A549 (cell line): ENCODE measurements at regions of chr19 and their contacts with region 1.

Region 1: GRCh38 chr19:40523322-40524047 is 53.2 kb upstream of the SHKBP1 start:
- DNase-seq: peak; percentile 93 to 96
- ATAC-seq: peak; percentile 80 to 90
- H3K4me3 ChIP-seq: peak overlapping the region; percentile 9; the same call in 2 of the 3 replicates
- H3K27ac ChIP-seq: peak overlapping the region; percentile 57 to 73
- H3K4me1 ChIP-seq: peaks cover 21% of the 10 kb centered on the region
- CTCF ChIP-seq: peak; percentile 92
- EP300 ChIP-seq: no peak
- POLR2A ChIP-seq: no peak
- RAD21 ChIP-seq: peak; percentile 62 to 73

Region 2: GRCh38 chr19:40370997-40371801 is 152.3 kb before region 1 on chr19:
- CTCF ChIA-PET with region 1: no interaction called
- POLR2A ChIA-PET with region 1: no interaction called
- DNase-seq: no peak
- ATAC-seq: peak in 1 of 2 experiments; percentile 12; a peak in 2 of 6 replicates
- H3K4me3 ChIP-seq: no peak overlapping the region
- H3K27ac ChIP-seq: no peak overlapping the region
- H3K4me1 ChIP-seq: peaks cover 8% of the 10 kb centered on the region
- CTCF ChIP-seq: no peak
- EP300 ChIP-seq: no peak
- POLR2A ChIP-seq: no peak
- RAD21 ChIP-seq: no peak

Region 3: DNA sequence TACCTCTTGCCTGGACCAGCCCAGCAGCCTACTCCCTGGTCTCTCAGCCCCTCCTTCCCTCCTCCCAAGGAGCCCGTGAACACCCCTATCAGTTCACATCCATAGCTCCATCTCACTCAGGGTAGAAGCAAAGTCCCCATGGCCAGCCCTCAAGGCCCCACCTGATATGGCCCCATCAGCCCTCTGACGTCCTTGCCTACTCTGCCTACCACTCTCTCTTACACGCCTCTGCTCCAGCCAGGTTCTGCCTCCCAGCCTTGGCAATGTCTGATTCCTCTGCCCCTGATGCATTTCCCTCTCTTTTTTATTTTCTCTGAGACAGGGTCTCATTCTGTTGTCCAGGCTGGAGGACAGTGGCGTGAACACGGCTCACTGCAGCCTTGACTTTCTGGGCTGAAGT is 71.5 kb before region 1 on chr19:
- CTCF ChIA-PET with region 1: interaction called, 10 read pairs
- POLR2A ChIA-PET with region 1: no interaction called
- DNase-seq: no peak
- ATAC-seq: peak; percentile 58 to 60; a peak in 5 of 6 replicates
- H3K4me3 ChIP-seq: no peak overlapping the region
- H3K27ac ChIP-seq: no peak overlapping the region
- H3K4me1 ChIP-seq: no peaks in the 10 kb centered on the region
- CTCF ChIP-seq: no peak
- EP300 ChIP-seq: no peak
- POLR2A ChIP-seq: no peak
- RAD21 ChIP-seq: no peak

Region 4: GRCh38 chr19:40472516-40472915 is 51.0 kb before region 1 on chr19:
- CTCF ChIA-PET with region 1: interaction called, 16 read pairs
- POLR2A ChIA-PET with region 1: no interaction called
- DNase-seq: no peak
- ATAC-seq: 0 out of 6 replicates have a peak, but pooled peaks of 1 of the 2 experiments have one; percentile 12
- H3K4me3 ChIP-seq: no peak overlapping the region
- H3K27ac ChIP-seq: no peak overlapping the region
- H3K4me1 ChIP-seq: no peaks in the 10 kb centered on the region
- CTCF ChIP-seq: no peak
- EP300 ChIP-seq: no peak
- POLR2A ChIP-seq: no peak
- RAD21 ChIP-seq: no peak

Region 5: GRCh38 chr19:40502647-40503319 is 20.7 kb before region 1 on chr19:
- CTCF ChIA-PET with region 1: interaction called, 51 read pairs
- POLR2A ChIA-PET with region 1: interaction called, 3 read pairs
- DNase-seq: peak; percentile 58 to 76
- ATAC-seq: peak; percentile 79 to 89
- H3K4me3 ChIP-seq: no peak overlapping the region
- H3K27ac ChIP-seq: no peak overlapping the region
- H3K4me1 ChIP-seq: no peaks in the 10 kb centered on the region
- CTCF ChIP-seq: 0 out of 3 replicates have a peak, but pooled peaks have one; percentile 31
- EP300 ChIP-seq: no peak
- POLR2A ChIP-seq: no peak
- RAD21 ChIP-seq: peak in 1 of 2 experiments; percentile 42; a peak in 2 of 5 replicates

Region 6: GRCh38 chr19:40542202-40542859 is 18.8 kb after region 1 on chr19:
- CTCF ChIA-PET with region 1: interaction called, 971 read pairs
- POLR2A ChIA-PET with region 1: no interaction called
- DNase-seq: no peak
- ATAC-seq: no peak
- H3K4me3 ChIP-seq: no peak overlapping the region
- H3K27ac ChIP-seq: no peak overlapping the region
- H3K4me1 ChIP-seq: no peaks in the 10 kb centered on the region
- CTCF ChIP-seq: no peak
- EP300 ChIP-seq: no peak
- POLR2A ChIP-seq: no peak
- RAD21 ChIP-seq: no peak

Region 7: GRCh38 chr19:40682431-40682964 is 159.0 kb after region 1 on chr19:
- CTCF ChIA-PET with region 1: no interaction called
- POLR2A ChIA-PET with region 1: no interaction called
- DNase-seq: no peak
- ATAC-seq: no peak
- H3K4me3 ChIP-seq: no peak overlapping the region
- H3K27ac ChIP-seq: no peak overlapping the region
- H3K4me1 ChIP-seq: peaks cover 2% of the 10 kb centered on the region; the same call in 1 of the 3 replicates
- CTCF ChIP-seq: no peak
- EP300 ChIP-seq: no peak
- POLR2A ChIP-seq: no peak
- RAD21 ChIP-seq: no peak

Region 8: GRCh38 chr19:40716655-40717324 is 193.3 kb after region 1 on chr19 and contains the starts of genes COQ8B and ITPKC:
- CTCF ChIA-PET with region 1: no interaction called
- POLR2A ChIA-PET with region 1: no interaction called
- DNase-seq: peak; percentile 99 to 100
- ATAC-seq: peak; percentile 45 to 61
- H3K4me3 ChIP-seq: peak within 1 kb of the TSS; percentile 64
- H3K27ac ChIP-seq: peak within 1 kb of the TSS; percentile 88 to 93
- H3K4me1 ChIP-seq: peaks cover 34% of the 10 kb centered on the region
- CTCF ChIP-seq: no peak
- EP300 ChIP-seq: no peak; a peak in 1 of 5 replicates
- POLR2A ChIP-seq: peak; percentile 60
- RAD21 ChIP-seq: peak in 1 of 2 experiments; percentile 14; a peak in 2 of 5 replicates
- polyA plus RNA-seq, gene COQ8B: 43.9 and 47.2 TPM in 2 replicates
- polyA plus RNA-seq, gene ITPKC: 6.5 and 8.7 TPM in 2 replicates